Tibial artery (tissue), 4 donors: ENCODE measurements at regions of chr9 and their contacts with region 1.

Region 1: DNA sequence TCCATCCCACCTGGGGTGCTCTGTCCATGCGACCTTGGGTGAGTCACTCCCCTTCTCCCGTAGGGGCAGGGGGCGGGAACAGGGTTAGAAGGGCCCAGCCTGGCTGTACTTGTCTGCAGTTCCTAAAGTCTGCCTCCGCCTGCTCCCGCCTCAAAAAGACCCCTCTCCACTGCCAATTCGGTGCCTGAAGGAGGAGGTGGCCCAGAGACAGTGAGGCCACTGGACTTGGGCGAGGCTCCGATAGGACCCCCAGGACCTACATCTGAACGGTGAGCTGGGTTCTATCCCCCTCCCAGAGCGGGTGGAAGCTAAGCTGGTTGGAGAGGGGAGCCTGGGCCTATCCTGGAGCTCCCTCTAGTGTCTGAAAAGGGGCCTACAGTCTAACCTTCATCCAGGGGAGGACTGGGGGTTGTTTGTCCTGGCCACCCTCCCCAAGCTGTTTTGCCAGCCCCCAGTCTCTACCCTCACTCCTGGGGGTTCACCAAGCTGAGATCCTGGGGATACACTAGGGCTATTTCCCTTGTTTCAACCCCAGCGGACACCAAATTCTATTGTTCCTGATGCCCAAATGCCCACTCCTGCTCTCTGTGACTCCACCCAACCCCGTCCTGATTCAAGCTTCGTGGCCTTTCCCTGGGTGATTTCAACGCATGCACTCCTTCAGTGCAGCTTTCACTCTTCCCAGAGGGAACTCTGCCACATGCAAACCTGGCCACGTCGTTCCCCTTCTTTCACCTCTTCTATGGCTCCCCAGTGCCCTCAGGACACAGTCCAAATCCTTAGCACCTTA is 6.1 kb upstream of the CRB2 start:
- DNase-seq: no peak
- H3K4me3 ChIP-seq: no peak overlapping the region
- H3K27ac ChIP-seq: no peak overlapping the region
- H3K4me1 ChIP-seq: peaks cover 0 to 11% (median 5%) of the 10 kb centered on the region in 4 donors
- H3K27me3 ChIP-seq: peaks cover 0 to 54% of the 10 kb centered on the region in 2 donors
- CTCF ChIP-seq: peak; percentile 91 to 98

Region 2: GRCh38 chr9:122464633-122465567 is 885.0 kb before region 1 on chr9:
- intact Hi-C with region 1: loop called (anchors 10 kb)
- DNase-seq: peak; percentile 79 to 86
- H3K4me3 ChIP-seq: peak overlapping the region; percentile 34 to 40
- H3K27ac ChIP-seq: no peak overlapping the region
- H3K4me1 ChIP-seq: peaks cover 0 to 13% (median 5%) of the 10 kb centered on the region in 4 donors
- H3K27me3 ChIP-seq: peaks cover 0 to 20% of the 10 kb centered on the region in 2 donors
- CTCF ChIP-seq: peak; percentile 73 to 89

Region 3: DNA sequence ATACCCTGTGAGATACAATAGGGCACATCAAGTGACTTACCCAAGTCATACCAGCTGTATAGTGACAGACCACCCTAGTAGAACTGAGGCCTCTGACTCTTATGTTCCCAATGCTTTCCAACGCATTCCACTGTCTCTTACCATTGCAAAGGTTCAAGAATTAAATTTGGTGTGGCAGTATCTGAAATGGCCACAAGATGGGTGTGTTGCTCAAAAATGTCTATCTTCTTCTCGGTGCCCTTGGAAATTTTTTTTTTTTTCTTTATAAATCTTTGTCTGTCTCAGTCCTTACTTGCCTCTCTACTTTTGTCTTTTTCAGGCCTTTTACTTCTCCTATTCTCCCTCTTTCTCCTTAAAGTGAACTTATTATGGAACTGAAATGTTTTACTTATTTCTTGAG is 268.1 kb before region 1 on chr9:
- intact Hi-C with region 1: loop called (anchors 5 kb)
- DNase-seq: no peak
- H3K4me3 ChIP-seq: no peak overlapping the region
- H3K27ac ChIP-seq: peak overlapping the region in 1 of 2 donors; percentile 19
- H3K4me1 ChIP-seq: peaks cover 0 to 90% (median 8%) of the 10 kb centered on the region in 4 donors
- H3K27me3 ChIP-seq: no peaks in the 10 kb centered on the region
- CTCF ChIP-seq: peak; percentile 52 to 58

Region 4: DNA sequence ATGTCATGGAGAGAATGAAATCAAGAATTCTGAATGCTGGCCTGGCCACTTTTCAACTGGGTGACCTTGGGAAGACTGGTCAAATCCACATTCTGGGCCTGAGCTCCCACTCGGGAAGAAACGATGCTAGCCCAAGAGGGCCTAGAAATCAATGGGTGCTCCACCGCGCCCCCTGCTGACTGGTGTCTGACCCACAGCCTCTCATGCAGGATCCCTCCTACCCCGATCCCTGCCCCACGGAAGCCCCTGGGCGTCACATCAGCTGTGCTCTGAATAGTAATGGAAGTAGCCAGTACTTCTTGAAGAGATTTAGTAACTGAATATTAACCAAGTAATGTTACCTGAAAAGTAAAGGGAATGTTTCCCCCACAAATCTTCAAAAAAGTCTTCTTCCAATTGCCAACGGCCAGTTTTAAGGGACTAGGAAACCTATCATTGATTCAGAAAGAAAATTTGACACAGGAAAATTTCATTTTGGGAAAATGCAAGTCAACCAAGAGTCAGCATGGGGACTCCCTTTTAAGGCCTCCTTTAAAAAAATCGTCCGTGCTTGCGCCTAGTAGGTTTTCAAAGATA is 50.0 kb after region 1 on chr9:
- intact Hi-C with region 1: no loop called
- DNase-seq: no peak
- H3K4me3 ChIP-seq: no peak overlapping the region
- H3K27ac ChIP-seq: no peak overlapping the region
- H3K4me1 ChIP-seq: peaks cover 0 to 18% (median 5%) of the 10 kb centered on the region in 4 donors
- H3K27me3 ChIP-seq: no peaks in the 10 kb centered on the region
- CTCF ChIP-seq: peak in 1 of 2 experiments; percentile 11